ENCODE measurements at regions of chr3 and their contacts with region 1.

Region 1: DNA sequence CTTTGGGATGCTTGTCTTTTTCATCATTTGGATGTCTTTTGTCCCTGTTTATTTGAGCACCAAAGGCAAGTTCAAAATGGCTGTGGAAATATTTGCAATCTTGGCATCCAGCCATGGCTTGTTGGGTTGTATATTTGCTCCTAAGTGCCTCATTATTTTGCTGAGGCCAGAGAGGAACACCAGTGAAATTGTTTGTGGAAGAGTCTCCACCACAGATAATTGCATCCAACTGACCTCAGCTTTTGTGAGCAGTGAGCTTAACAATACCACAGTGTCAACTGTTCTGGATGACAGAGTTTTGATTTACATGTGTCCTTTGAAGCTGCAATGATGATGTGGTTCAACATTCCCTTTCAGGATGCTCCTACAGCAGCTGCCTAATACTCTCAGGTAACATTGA is 83.0 kb upstream of the KCNAB1 start:
- DNase-seq: no peak

Region 2: DNA sequence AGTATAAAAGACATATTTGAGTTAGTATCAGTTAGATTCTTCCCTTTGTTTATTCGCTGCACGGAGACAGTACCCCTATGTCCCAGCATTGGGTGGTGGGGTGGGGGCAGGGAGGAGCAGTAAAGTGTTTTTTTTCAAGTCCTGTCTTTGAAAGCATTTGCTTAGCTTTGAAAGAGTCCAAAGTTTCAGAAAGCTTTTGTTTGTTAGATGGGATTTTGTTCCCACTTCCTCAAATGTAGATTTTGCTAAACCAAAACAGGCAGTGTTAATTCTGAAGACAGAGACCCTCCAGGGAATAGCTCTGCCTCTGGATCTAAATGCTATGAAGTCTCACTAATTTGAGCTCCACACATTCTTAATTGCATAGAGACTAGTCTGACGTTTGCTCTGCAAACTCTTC is 31.6 kb before region 1 on chr3:
- intact Hi-C with region 1: loop called in 1 of 2 experiments (anchors 2 kb)
- DNase-seq: no peak

Region 3: GRCh38 chr3:156090126-156090525 is 52.8 kb after region 1 on chr3:
- intact Hi-C with region 1: no loop called
- DNase-seq: no peak

Region 4: GRCh38 chr3:156151824-156152428 is 114.6 kb after region 1 on chr3:
- intact Hi-C with region 1: loop called in 1 of 2 experiments (anchors 10 kb)
- DNase-seq: peak; percentile 85

Region 5: GRCh38 chr3:156509189-156510174 is 472.1 kb after region 1 on chr3:
- intact Hi-C with region 1: loop called in 1 of 2 experiments (anchors 10 kb)
- DNase-seq: no peak